ENCODE measurements at regions of chr2 and their contacts with region 1.

Region 1: GRCh38 chr2:86368161-86368824 is 30.9 kb upstream of the REEP1 start:
- DNase-seq: no peak
- ATAC-seq: peak; percentile 38

Region 2: DNA sequence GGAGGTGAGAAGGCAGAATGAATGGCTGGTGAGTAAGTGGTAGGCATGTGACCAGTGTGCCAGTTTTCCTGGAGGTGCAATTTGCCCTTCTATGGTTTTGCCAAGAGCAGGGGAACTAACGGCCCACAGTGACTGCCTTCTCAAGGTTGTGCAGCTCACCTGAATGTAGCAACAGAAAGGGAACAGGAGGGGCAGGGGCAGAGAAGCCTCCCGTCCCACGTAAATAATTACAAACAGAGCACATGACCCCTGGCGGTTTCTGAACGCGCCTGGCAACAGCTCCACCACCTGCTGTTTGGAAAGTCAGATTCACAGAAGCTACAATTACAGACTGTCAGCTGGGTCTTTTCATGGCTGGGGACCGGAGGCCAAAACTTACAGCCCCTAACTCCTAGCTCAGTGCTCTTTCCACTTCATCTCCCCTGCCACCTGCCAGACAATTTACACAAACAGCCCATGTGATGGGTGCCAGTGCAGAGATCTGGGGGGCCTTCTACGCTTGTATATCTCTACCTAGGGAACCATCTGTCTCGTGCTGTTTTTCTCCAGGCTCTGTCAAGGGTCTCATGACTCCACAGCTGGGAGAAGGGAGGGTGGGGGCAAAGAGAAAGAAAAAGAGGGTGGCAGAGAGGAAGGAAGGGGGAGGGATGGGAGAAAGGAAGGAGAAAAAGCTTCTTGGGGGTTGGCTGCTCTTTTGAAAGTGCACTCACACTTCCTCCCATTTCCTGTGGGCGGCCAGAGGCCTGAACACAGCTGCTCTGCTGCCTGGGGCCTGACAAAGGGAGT is 332.2 kb before region 1 on chr2:
- intact Hi-C with region 1: no loop called
- DNase-seq: peak; percentile 89
- ATAC-seq: peak; percentile 89

Region 3: GRCh38 chr2:86221066-86221684 is 147.1 kb before region 1 on chr2:
- intact Hi-C with region 1: loop called (anchors 10 kb)
- DNase-seq: no peak
- ATAC-seq: no peak

Region 4: GRCh38 chr2:86337244-86337836 is 31.0 kb before region 1 on chr2 and contains the start of gene REEP1:
- intact Hi-C with region 1: no loop called
- DNase-seq: no peak
- ATAC-seq: no peak
- total RNA-seq, gene REEP1: 0.98 TPM